Adrenal gland (tissue), 19 donors: ENCODE measurements at regions of chr1 and their contacts with region 1.

Region 1: DNA sequence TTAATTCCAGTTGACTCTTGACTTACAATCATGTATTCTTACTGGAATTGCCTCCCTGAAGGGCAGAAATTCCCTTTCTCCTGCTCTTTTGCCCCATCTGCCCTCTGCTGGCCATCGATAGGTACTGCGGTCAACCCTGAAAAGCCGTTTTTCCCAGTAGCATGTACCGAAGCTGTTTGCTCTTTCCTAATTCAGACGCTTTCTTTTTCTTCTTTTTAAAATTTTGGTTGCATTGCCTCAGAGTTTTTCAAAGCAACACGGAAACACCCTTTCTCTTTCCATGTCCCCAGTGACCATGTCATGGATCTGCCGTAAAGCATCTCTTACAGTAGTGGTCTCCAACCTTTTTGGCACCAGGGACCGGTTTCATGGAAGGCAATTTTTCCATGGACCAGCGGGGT is 164.2 kb upstream of the C1orf21 start:
- DNase-seq: peak; percentile 38 to 80 (median 62)
- H3K4me3 ChIP-seq: peak overlapping the region in 1 of 4 donors; percentile 25
- H3K27ac ChIP-seq: no peak overlapping the region
- H3K4me1 ChIP-seq: no peaks in the 10 kb centered on the region
- H3K27me3 ChIP-seq: no peaks in the 10 kb centered on the region
- CTCF ChIP-seq: peak; percentile 92 to 98 (median 95)
- POLR2A ChIP-seq: no peak

Region 2: GRCh38 chr1:183837062-183837461 is 385.6 kb before region 1 on chr1:
- intact Hi-C with region 1: no loop called
- DNase-seq: peak in 2 of 7 donors; percentile 23 to 39
- H3K4me3 ChIP-seq: no peak overlapping the region
- H3K27ac ChIP-seq: peak overlapping the region in 1 of 5 donors; percentile 20
- H3K4me1 ChIP-seq: peaks cover 7 to 49% of the 10 kb centered on the region in 2 donors
- H3K27me3 ChIP-seq: no peaks in the 10 kb centered on the region
- CTCF ChIP-seq: no peak
- POLR2A ChIP-seq: no peak

Region 3: GRCh38 chr1:184075055-184076029 is 147.3 kb before region 1 on chr1:
- intact Hi-C with region 1: loop called (anchors 5 kb)
- DNase-seq: peak in 6 of 7 donors; percentile 33 to 59 (median 54)
- H3K4me3 ChIP-seq: no peak overlapping the region
- H3K27ac ChIP-seq: peak overlapping the region in 2 of 5 donors; percentile 1 to 36
- H3K4me1 ChIP-seq: no peaks in the 10 kb centered on the region
- H3K27me3 ChIP-seq: no peaks in the 10 kb centered on the region
- CTCF ChIP-seq: peak; percentile 36 to 91 (median 86)
- POLR2A ChIP-seq: no peak

Region 4: GRCh38 chr1:184260382-184260781 is 37.7 kb after region 1 on chr1:
- intact Hi-C with region 1: no loop called
- DNase-seq: no peak
- H3K4me3 ChIP-seq: no peak overlapping the region
- H3K27ac ChIP-seq: no peak overlapping the region
- H3K4me1 ChIP-seq: peaks cover 0 to 6% of the 10 kb centered on the region in 2 donors
- H3K27me3 ChIP-seq: no peaks in the 10 kb centered on the region
- CTCF ChIP-seq: no peak
- POLR2A ChIP-seq: no peak